CD8-positive, alpha-beta T cell (primary cell): ENCODE measurements at regions of chr10 and their contacts with region 1.

Region 1: GRCh38 chr10:15433850-15434537 is 62.9 kb upstream of the FAM171A1 start:
- DNase-seq: peak in 5 of 9 experiments; percentile 8 to 72 (median 37)
- ATAC-seq: no peak
- H3K4me3 ChIP-seq: peak overlapping the region; percentile 2 to 29
- H3K4me3 Mint-ChIP-seq: peak overlapping the region; percentile 70
- H3K27ac ChIP-seq: no peak overlapping the region
- H3K27ac Mint-ChIP-seq: no peak overlapping the region
- H3K4me1 ChIP-seq: no peaks in the 10 kb centered on the region
- H3K4me1 Mint-ChIP-seq: peaks cover 8% of the 10 kb centered on the region
- H3K27me3 ChIP-seq: peaks cover 0 to 3% of the 10 kb centered on the region in 2 experiments
- H3K27me3 Mint-ChIP-seq: peaks cover 26% of the 10 kb centered on the region
- CTCF ChIP-seq: peak; percentile 93

Region 2: GRCh38 chr10:15829495-15829894 is 395.5 kb after region 1 on chr10:
- CTCF ChIA-PET with region 1: no interaction called
- POLR2A ChIA-PET with region 1: no interaction called
- intact Hi-C with region 1: loop called in 1 of 2 experiments (anchors 5 kb)
- DNase-seq: no peak
- ATAC-seq: no peak
- H3K4me3 ChIP-seq: no peak overlapping the region
- H3K4me3 Mint-ChIP-seq: no peak overlapping the region
- H3K27ac ChIP-seq: no peak overlapping the region
- H3K27ac Mint-ChIP-seq: no peak overlapping the region
- H3K4me1 ChIP-seq: no peaks in the 10 kb centered on the region
- H3K4me1 Mint-ChIP-seq: peaks cover 8% of the 10 kb centered on the region
- H3K27me3 ChIP-seq: no peaks in the 10 kb centered on the region
- H3K27me3 Mint-ChIP-seq: no peaks in the 10 kb centered on the region
- CTCF ChIP-seq: no peak